PC-3 (cell line): ENCODE measurements at regions of chr17 and their contacts with region 1.

Region 1: DNA sequence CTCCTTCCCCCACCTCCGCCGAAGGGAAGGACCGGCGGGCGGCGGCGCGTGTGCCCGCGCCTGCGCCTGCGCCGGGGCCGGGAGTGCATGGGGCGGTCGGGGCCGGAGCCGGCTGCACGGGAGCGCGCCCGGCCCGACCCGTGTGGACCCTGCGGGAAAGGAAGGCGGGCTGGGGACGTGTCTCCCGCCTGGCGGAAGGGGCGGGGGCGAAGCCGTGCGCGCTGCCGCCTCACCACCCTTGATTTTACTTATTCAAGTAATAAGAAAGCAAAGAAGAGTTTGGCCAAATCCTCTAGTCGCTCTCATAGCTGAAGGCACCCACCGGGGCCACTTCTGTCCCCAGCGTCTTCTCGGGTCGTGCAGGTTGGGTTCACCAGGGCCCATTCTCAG is 596 bp upstream of the PFN1 start:
- DNase-seq: peak; percentile 85
- ATAC-seq: peak; percentile 55
- H3K4me3 ChIP-seq: peak overlapping the region; percentile 90
- H3K27ac ChIP-seq: peak overlapping the region; percentile 85
- H3K4me1 ChIP-seq: peaks cover 30% of the 10 kb centered on the region
- H3K27me3 ChIP-seq: no peaks in the 10 kb centered on the region
- CTCF ChIP-seq: no peak

Region 2: GRCh38 chr17:4870855-4871254 is 78.1 kb before region 1 on chr17:
- CTCF ChIA-PET with region 1: no interaction called
- POLR2A ChIA-PET with region 1: no interaction called
- intact Hi-C with region 1: no loop called
- DNase-seq: no peak
- ATAC-seq: no peak
- H3K4me3 ChIP-seq: no peak overlapping the region
- H3K27ac ChIP-seq: no peak overlapping the region
- H3K4me1 ChIP-seq: no peaks in the 10 kb centered on the region
- H3K27me3 ChIP-seq: no peaks in the 10 kb centered on the region
- CTCF ChIP-seq: no peak

Region 3: DNA sequence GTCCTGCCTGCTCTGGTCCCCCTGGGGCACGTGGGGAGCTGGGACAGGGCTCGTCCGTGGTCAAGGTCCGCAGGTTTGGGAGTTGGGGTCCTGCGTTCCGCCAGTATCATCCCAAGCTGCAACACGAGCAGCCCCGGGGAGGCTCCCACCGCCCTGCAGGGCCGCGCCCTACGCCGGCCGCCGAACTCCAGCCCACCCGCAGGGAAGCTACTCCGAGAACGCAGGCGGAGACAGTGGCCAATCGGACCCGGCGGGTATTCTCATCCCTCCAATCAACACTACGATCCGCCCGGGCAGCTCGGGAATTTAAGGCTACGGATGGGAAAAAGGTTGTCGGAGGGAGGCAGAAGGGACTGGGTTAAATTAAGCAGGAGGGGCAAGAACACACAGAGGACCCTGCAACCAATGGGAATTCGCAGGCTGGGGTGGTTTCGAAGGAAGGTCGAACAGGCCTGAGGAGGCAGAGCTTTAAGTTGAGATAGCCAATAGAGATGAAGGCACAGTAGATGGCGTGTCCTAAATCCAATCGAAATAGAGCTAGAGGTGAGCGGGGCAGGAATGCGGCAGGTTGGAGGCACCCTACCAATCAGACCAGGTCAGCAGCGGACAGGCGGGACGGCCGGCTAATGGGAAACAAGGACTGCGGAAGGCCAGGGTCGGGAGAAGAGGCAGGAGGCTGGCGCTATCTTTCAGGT is 18.1 kb after region 1 on chr17:
- CTCF ChIA-PET with region 1: no interaction called
- POLR2A ChIA-PET with region 1: interaction called, 5 read pairs
- intact Hi-C with region 1: loop called (anchors 1 kb)
- DNase-seq: peak; percentile 96
- ATAC-seq: peak; percentile 88
- H3K4me3 ChIP-seq: peak overlapping the region; percentile 79
- H3K27ac ChIP-seq: peak overlapping the region; percentile 92
- H3K4me1 ChIP-seq: peaks cover 23% of the 10 kb centered on the region
- H3K27me3 ChIP-seq: no peaks in the 10 kb centered on the region
- CTCF ChIP-seq: no peak

Region 4: GRCh38 chr17:4997302-4998026 is 48.5 kb after region 1 on chr17 and contains the starts of genes INCA1 and KIF1C:
- CTCF ChIA-PET with region 1: no interaction called
- POLR2A ChIA-PET with region 1: no interaction called
- intact Hi-C with region 1: loop called (anchors 2 kb)
- DNase-seq: peak; percentile 85
- ATAC-seq: peak; percentile 85
- H3K4me3 ChIP-seq: peak within 1 kb of the TSS; percentile 79
- H3K27ac ChIP-seq: no peak within 1 kb of the TSS
- H3K4me1 ChIP-seq: 0 out of 2 replicates have a peak, but pooled peaks cover 9% of the 10 kb centered on the region
- H3K27me3 ChIP-seq: no peaks in the 10 kb centered on the region
- CTCF ChIP-seq: no peak
- total RNA-seq, gene INCA1: not detected in 2 replicates
- total RNA-seq, gene KIF1C: 60.9 and 67.9 TPM in 2 replicates

Region 5: DNA sequence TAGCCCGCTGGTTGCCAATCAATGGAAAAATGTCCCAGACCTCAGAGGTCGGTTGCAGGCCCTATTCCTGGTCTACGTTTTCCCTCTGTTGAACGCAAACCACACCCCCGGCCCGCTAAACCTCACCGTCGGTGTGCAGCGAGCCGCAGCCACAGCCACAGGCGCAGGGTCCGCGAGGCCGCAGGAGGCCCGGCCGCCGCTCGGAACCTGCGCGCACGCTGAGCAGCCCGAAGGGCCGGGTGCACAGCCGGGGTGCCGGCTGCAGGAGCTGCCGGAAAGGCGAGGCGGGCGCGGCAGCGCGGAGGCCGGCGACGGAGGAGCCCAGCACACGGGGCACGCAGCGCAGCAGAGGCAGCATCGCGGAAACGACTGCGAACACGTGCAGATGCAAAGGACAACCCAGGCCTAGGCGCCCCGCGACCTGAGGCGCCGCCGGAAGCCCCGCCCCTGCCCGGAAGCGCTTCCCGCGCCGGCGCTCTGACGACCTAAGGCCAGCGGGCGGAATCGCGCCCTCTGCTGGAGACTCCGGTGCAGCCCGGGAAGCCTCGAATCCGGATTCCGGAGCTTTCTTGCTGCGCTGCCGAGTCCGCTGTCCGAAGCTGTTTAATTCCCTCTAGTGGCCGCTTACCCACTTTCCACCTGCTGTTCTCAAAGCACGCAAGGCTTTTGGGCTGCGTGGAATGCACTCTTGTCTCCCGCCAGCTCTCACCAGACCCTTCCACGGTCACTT is 490.0 kb after region 1 on chr17 and contains the start of gene C1QBP:
- CTCF ChIA-PET with region 1: interaction called, 12 read pairs
- POLR2A ChIA-PET with region 1: no interaction called
- intact Hi-C with region 1: no loop called
- DNase-seq: peak; percentile 94
- ATAC-seq: peak; percentile 86
- H3K4me3 ChIP-seq: peak within 1 kb of the TSS; percentile 99
- H3K27ac ChIP-seq: peak within 1 kb of the TSS; percentile 62
- H3K4me1 ChIP-seq: peaks cover 20% of the 10 kb centered on the region
- H3K27me3 ChIP-seq: no peaks in the 10 kb centered on the region
- CTCF ChIP-seq: peak; percentile 85
- total RNA-seq, gene C1QBP: 303 and 308 TPM in 2 replicates